A673 (cell line): ENCODE measurements at regions of chr4 and their contacts with region 1.

Region 1: DNA sequence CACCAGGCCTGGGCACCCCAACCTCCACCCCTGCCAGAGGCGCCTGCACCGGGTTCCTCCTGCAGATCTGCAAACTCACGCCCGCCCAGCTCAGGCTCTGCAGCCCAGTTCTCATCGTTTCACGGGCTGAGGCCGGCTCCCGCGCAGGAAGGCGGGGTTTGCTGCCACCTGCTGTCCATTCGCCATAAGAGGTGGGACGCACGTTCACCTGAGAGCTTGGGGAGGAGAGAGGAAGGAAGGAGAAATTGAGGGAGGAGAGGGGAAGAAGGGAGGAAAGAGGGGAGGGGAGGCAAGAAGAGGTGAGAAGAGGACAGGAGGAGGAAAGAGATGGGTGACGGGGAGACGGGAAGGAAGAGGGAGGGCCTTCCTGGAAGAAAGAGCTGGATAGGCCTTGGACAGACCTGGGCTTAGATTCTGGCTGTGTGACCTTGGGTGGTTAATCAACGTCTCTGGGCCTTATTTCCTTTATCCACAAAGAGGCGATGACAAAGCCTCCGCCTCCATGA is 114.5 kb downstream of the ADRA2C start:
- DNase-seq: peak; percentile 86
- H3K4me3 ChIP-seq: peak overlapping the region; percentile 12
- H3K27ac ChIP-seq: no peak overlapping the region
- H3K4me1 ChIP-seq: peaks cover 21% of the 10 kb centered on the region
- H3K27me3 ChIP-seq: peaks cover 12% of the 10 kb centered on the region
- CTCF ChIP-seq: peak; percentile 90

Region 2: GRCh38 chr4:3480528-3481112 is 400.0 kb before region 1 on chr4:
- CTCF ChIA-PET with region 1: interaction called, 10 read pairs
- POLR2A ChIA-PET with region 1: no interaction called
- intact Hi-C with region 1: no loop called
- DNase-seq: peak; percentile 77
- H3K4me3 ChIP-seq: no peak overlapping the region
- H3K27ac ChIP-seq: no peak overlapping the region
- H3K4me1 ChIP-seq: no peaks in the 10 kb centered on the region
- H3K27me3 ChIP-seq: peaks cover 27% of the 10 kb centered on the region
- CTCF ChIP-seq: peak; percentile 97

Region 3: DNA sequence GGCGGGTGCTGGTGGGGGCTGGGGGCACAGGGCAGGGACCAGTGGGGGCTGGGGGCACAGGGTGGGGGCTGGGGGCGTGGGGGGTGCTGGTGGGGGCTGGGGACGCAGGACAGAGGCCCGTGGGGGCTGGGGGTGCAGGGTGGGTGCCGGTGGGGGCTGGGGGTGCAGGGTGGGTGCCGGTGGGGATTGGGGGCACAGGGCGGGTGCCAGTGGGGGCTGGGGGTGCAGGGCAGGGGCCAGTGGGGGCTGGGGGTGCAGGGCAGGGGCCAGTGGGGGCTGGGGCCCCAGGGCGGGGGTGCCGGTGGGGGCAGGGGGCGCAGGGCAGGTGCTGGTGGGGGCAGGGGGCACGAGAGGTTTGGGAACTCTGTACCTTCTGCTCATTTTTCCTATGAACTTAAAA is 150.2 kb before region 1 on chr4:
- CTCF ChIA-PET with region 1: interaction called, 12 read pairs
- POLR2A ChIA-PET with region 1: no interaction called
- intact Hi-C with region 1: no loop called
- DNase-seq: no peak
- H3K4me3 ChIP-seq: no peak overlapping the region
- H3K27ac ChIP-seq: no peak overlapping the region
- H3K4me1 ChIP-seq: peaks cover 7% of the 10 kb centered on the region
- H3K27me3 ChIP-seq: no peaks in the 10 kb centered on the region
- CTCF ChIP-seq: no peak

Region 4: DNA sequence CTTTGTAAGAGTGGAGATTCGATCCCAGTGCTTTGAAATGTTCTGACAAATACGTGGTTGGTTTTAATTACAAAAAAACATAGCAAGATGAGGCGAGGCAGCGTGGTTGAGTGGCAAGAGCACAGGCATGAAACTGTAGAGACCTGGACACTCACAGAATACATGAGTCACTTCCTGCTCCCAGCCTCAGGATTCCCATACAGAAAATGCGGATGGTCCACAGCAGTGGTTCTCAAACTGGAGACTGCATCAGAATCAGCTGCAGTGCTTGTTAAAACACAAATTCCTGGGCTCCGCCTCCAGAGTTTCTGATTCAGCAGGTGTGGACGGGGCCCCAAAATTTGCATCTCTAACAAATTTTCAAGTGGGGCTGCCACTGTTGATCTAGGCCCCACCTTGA is 336.0 kb after region 1 on chr4:
- CTCF ChIA-PET with region 1: no interaction called
- POLR2A ChIA-PET with region 1: no interaction called
- intact Hi-C with region 1: no loop called
- DNase-seq: peak; percentile 15
- H3K4me3 ChIP-seq: no peak overlapping the region
- H3K27ac ChIP-seq: no peak overlapping the region
- H3K4me1 ChIP-seq: no peaks in the 10 kb centered on the region
- H3K27me3 ChIP-seq: peaks cover 23% of the 10 kb centered on the region
- CTCF ChIP-seq: no peak

Region 5: GRCh38 chr4:5812506-5813229 is 1932.0 kb after region 1 on chr4:
- CTCF ChIA-PET with region 1: interaction called, 10 read pairs
- POLR2A ChIA-PET with region 1: no interaction called
- intact Hi-C with region 1: no loop called
- DNase-seq: peak; percentile 85
- H3K4me3 ChIP-seq: no peak overlapping the region
- H3K27ac ChIP-seq: no peak overlapping the region
- H3K4me1 ChIP-seq: peaks cover 12% of the 10 kb centered on the region
- H3K27me3 ChIP-seq: no peaks in the 10 kb centered on the region
- CTCF ChIP-seq: peak; percentile 72